ENCODE measurements at regions of chr15 and their contacts with region 1.

Region 1: GRCh38 chr15:52679232-52680040 is at the start of gene ATOSA:
- DNase-seq: peak; percentile 93 to 95 (median 94)
- ATAC-seq: peak; percentile 84 to 96 (median 94)
- H3K4me3 ChIP-seq: peak within 1 kb of the TSS; percentile 68 to 95 (median 88)
- H3K27ac ChIP-seq: peak within 1 kb of the TSS; percentile 93 to 99 (median 97)
- H3K4me1 ChIP-seq: peaks cover 7 to 47% (median 32%) of the 10 kb centered on the region in 12 donors
- H3K27me3 ChIP-seq: no peaks in the 10 kb centered on the region
- CTCF ChIP-seq: peak in 1 of 12 donors; percentile 21
- POLR2A ChIP-seq: peak in 1 of 2 donors; percentile 85
- total RNA-seq, gene ATOSA: 21.3 to 51.5 (median 29.8) TPM

Region 2: DNA sequence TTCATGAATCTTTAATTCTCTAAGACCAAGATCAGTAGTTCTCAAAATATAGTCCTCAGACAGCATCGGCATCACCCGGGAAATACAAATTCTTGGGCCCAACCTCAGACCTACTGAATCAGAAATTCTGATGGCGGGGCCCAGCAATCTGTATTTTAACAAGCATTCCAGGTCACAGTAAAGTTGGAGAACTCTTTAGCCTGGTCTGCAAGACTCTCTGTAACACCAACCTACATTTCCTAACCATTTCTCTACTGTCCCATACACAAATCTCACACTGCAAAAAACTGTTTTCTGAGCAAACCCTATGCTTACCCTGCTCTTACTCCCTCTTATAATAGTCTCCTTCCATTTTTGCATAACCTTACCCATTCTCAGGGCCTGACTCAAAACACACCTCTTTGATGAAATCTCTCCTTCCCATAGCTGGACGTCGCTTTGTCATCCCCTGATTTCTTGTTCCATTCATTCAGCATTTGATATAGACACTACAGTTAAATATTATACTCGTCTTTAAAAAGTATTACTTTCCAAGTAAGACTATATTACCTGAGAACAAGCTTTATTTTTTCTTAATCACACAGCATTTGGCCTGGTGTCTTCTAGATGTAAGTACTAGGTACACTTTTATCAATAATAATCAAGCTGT is 300.6 kb before region 1 on chr15:
- intact Hi-C with region 1: no loop called
- DNase-seq: no peak
- ATAC-seq: no peak
- H3K4me3 ChIP-seq: no peak overlapping the region
- H3K27ac ChIP-seq: no peak overlapping the region
- H3K4me1 ChIP-seq: no peaks in the 10 kb centered on the region
- H3K27me3 ChIP-seq: no peaks in the 10 kb centered on the region
- CTCF ChIP-seq: no peak
- POLR2A ChIP-seq: no peak

Region 3: DNA sequence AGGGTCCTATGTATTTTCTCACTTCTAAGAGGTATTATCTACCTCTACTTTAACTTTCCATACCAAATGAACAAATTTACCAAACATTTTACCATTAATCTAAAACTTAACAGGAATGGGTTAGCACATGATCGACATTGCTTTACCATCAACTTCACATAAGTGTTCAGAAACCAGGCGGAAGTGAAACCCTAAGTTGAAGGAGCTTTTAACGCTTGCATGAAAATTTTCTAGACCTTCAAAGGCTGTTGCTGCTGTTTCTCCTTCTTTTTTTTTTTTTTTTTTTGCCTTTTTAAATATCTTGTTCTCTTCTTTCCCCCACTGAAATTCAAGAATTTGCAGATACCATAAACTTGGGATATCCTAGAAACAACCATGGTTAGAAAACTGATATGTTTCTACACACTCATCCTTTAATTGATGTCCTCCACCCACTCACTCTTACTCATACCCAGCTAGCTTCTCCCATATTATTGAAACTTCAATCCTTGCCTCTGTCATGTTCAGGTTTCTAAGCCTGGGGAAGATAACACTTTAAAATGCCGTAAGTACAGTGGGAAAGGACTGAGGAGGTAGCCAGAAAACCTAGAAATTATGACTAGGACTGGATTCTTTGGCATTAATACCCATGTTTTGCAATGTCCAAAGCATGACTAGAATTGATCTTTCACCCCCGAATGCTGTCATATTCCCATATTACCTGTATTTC is 175.5 kb before region 1 on chr15:
- intact Hi-C with region 1: no loop called
- DNase-seq: no peak
- ATAC-seq: no peak
- H3K4me3 ChIP-seq: no peak overlapping the region
- H3K27ac ChIP-seq: peak overlapping the region in 1 of 12 donors; percentile 76
- H3K4me1 ChIP-seq: peaks cover 0 to 36% (median 1%) of the 10 kb centered on the region in 12 donors
- H3K27me3 ChIP-seq: no peaks in the 10 kb centered on the region
- CTCF ChIP-seq: no peak
- POLR2A ChIP-seq: no peak

Region 4: DNA sequence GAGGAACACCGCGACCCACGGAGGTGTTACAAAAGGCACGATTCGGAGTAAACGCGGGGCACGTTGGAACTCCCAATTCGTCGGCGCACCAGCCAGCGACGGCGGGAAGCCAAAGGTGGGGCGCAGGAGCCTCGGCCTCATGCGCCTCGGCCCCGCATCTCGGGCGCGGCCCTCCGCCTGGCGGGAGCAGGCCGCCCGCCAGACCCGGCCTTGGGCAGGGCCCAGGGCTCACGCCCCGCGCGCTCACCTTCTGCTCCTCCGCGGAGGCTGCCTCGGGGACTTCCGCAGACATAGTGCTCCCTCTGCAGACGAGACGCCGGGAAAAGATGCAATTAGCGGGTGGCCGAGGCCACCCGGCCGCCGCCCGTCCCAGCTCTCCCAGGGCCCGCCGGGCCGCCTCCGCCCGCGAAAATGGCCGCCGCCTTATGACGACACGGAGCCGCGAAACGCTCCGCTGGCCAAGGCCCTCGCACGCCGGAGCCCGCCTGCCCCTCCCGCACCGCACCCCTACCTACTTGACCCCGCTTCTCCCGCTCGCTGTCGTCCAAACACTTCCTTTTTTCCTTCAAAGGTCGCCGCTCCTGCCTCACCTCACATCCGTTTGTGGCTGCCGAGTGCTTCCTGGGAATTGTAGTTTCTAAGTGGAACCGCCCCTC is 110.7 kb before region 1 on chr15 and contains the start of gene ARPP19:
- intact Hi-C with region 1: loop called in 2 of 10 experiments (anchors 2 to 10 kb)
- DNase-seq: peak; percentile 88 to 94 (median 90)
- ATAC-seq: peak; percentile 80 to 96 (median 92)
- H3K4me3 ChIP-seq: peak within 1 kb of the TSS; percentile 63 to 94 (median 77)
- H3K27ac ChIP-seq: peak within 1 kb of the TSS; percentile 78 to 96 (median 94)
- H3K4me1 ChIP-seq: peaks cover 2 to 49% (median 33%) of the 10 kb centered on the region in 12 donors
- H3K27me3 ChIP-seq: no peaks in the 10 kb centered on the region
- CTCF ChIP-seq: peak in 8 of 12 donors; percentile 9 to 49 (median 21)
- POLR2A ChIP-seq: peak in 1 of 2 donors; percentile 76
- total RNA-seq, gene ARPP19: 77.2 to 182 (median 147) TPM

Region 5: GRCh38 chr15:52615284-52615683 is 64.2 kb before region 1 on chr15:
- intact Hi-C with region 1: loop called in 3 of 10 experiments (anchors 10 kb)
- DNase-seq: no peak
- ATAC-seq: no peak
- H3K4me3 ChIP-seq: no peak overlapping the region
- H3K27ac ChIP-seq: no peak overlapping the region
- H3K4me1 ChIP-seq: no peaks in the 10 kb centered on the region
- H3K27me3 ChIP-seq: no peaks in the 10 kb centered on the region
- CTCF ChIP-seq: no peak
- POLR2A ChIP-seq: no peak

Region 6: DNA sequence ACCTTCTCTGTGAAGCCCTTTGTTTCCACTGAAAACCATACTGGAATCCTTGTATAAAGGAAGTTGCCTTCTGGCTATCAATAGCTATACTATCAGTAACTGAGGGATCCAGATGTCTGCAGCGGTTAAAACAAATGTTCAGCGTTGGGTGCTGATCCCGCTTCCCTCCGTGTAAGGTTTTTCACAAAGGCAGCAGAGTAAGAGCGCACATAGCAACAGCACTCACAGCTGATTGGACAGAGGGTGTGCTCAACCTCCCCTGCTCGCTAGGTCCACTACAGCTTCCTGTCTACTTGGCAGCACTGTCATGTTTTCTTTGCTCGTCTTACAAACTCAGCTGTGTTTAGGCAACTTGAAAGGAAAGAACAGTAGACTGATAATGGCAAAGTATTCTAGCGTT is 27.6 kb before region 1 on chr15:
- intact Hi-C with region 1: loop called in 3 of 10 experiments (anchors 2 kb)
- DNase-seq: peak; percentile 61 to 79 (median 71)
- ATAC-seq: peak; percentile 96 to 100 (median 100)
- H3K4me3 ChIP-seq: peak overlapping the region in 9 of 12 donors; percentile 19 to 46 (median 33)
- H3K27ac ChIP-seq: peak overlapping the region; percentile 11 to 76 (median 68)
- H3K4me1 ChIP-seq: peaks cover 9 to 67% (median 42%) of the 10 kb centered on the region in 12 donors
- H3K27me3 ChIP-seq: no peaks in the 10 kb centered on the region
- CTCF ChIP-seq: no peak
- POLR2A ChIP-seq: peak in 1 of 2 donors; percentile 33

Region 7: DNA sequence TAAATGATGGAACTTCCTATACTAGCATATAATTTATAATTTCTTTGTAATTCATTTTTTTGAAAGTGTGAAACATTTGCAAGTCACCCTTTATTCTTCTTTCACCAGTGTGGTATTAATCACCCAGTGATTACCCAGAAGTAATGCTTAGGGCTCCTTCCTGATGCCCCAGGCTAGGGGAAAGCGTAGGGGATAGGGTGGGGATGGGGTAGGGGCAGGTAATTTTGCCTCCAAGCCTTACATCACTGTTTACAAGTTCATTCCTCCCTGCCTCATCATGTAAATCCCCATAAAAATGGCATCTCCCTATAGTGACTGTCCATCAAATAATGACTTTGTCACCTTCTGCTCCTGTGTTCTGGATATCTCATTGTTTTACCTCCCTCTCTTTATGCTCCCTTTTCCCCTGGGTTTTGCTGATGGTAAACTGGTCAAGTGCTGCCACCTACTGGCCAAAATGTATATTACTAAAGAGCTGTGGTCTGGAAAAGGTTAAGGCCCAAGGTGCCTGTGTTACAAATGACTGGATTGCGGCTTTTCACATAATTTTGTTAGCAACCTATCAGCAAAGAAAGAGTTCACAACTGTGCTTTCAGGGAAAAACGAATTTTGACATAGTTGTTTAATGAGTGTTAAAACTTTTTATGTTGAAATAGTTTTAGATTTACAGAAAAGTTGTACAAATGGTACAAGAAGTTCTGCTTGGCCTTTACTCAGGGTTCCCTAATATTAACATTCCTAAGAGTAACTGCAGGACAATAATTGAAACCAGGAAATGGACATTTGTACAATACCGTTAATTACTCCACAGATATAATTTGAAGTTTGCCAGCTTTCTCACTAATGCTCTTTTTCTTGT is 56.0 kb after region 1 on chr15:
- intact Hi-C with region 1: loop called in 7 of 10 experiments (anchors 5 to 10 kb)
- DNase-seq: peak in 2 of 5 donors; percentile 51 to 52
- ATAC-seq: peak; percentile 68 to 88 (median 86)
- H3K4me3 ChIP-seq: no peak overlapping the region
- H3K27ac ChIP-seq: no peak overlapping the region
- H3K4me1 ChIP-seq: peaks cover 0 to 23% (median 9%) of the 10 kb centered on the region in 12 donors
- H3K27me3 ChIP-seq: no peaks in the 10 kb centered on the region
- CTCF ChIP-seq: peak; percentile 68 to 92 (median 86)
- POLR2A ChIP-seq: no peak

Region 8: DNA sequence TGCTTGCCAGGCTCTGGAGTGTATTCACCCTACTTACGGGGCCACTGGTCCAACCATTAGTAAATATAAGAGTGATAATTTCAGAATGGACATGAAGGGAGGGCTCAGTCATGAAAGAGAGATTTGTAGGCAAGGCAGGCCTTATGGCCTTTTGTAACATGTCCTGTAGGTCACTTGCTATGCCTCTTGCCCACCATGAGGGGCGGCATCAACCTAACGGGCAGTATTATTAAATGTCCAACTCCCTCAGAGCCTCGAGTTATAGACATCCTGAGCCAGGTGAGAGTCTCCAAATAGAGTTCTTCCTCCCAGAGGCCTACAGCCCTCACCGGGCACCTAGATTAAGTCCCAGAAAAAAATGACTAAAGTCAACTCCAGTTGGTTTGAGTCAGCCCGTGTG is 80.5 kb after region 1 on chr15:
- intact Hi-C with region 1: no loop called
- DNase-seq: no peak
- ATAC-seq: no peak
- H3K4me3 ChIP-seq: no peak overlapping the region
- H3K27ac ChIP-seq: no peak overlapping the region
- H3K4me1 ChIP-seq: no peaks in the 10 kb centered on the region
- H3K27me3 ChIP-seq: peaks cover 0 to 18% (median 0%) of the 10 kb centered on the region in 9 donors
- CTCF ChIP-seq: no peak
- POLR2A ChIP-seq: no peak

Region 9: DNA sequence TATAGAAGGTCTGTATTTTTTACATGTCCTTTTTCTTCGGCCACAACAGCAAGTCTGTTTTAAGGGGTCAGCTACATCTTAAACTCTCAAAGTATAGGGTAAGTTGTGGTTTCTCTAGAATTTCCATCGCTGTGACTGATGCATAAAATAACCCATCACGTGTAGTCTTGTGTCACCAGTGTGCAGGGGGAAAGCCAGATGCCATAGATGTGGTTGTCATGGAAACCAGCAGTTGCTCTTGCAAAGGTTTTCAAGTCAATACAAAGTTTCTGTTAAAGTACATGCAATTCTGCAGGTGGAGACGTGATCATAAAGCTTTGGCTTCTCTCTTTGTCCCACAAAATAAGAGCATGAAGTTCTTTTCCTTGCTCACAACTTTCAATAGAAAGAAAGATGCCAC is 321.0 kb after region 1 on chr15:
- intact Hi-C with region 1: no loop called
- DNase-seq: no peak
- ATAC-seq: no peak
- H3K4me3 ChIP-seq: no peak overlapping the region
- H3K27ac ChIP-seq: no peak overlapping the region
- H3K4me1 ChIP-seq: no peaks in the 10 kb centered on the region
- H3K27me3 ChIP-seq: peaks cover 0 to 5% (median 0%) of the 10 kb centered on the region in 9 donors
- CTCF ChIP-seq: no peak
- POLR2A ChIP-seq: no peak

Measured in heart left ventricle (tissue), 16 donors.